CD14-positive monocyte (primary cell): ENCODE measurements at regions of chr5 and their contacts with region 1.

Region 1: GRCh38 chr5:39714036-39714698 is 289.4 kb upstream of the DAB2 start:
- DNase-seq: peak; percentile 19 to 46 (median 40)
- H3K4me3 ChIP-seq: no peak overlapping the region
- H3K4me3 Mint-ChIP-seq: no peak overlapping the region
- H3K27ac ChIP-seq: no peak overlapping the region
- H3K27ac Mint-ChIP-seq: peak overlapping the region in 2 of 7 donors; percentile 10 to 21
- H3K4me1 ChIP-seq: peaks cover 0 to 3% of the 10 kb centered on the region in 2 donors
- H3K4me1 Mint-ChIP-seq: peaks cover 6% of the 10 kb centered on the region
- H3K27me3 ChIP-seq: no peaks in the 10 kb centered on the region
- H3K27me3 Mint-ChIP-seq: peaks cover 0 to 2% (median 0%) of the 10 kb centered on the region in 3 donors
- CTCF ChIP-seq: peak; percentile 74

Region 2: GRCh38 chr5:40879163-40879942 is 1165.2 kb after region 1 on chr5:
- intact Hi-C with region 1: loop called in 1 of 2 experiments (anchors 10 kb)
- DNase-seq: peak in 1 of 3 donors; percentile 38
- H3K4me3 ChIP-seq: no peak overlapping the region
- H3K4me3 Mint-ChIP-seq: no peak overlapping the region
- H3K27ac ChIP-seq: no peak overlapping the region
- H3K27ac Mint-ChIP-seq: no peak overlapping the region
- H3K4me1 ChIP-seq: no peaks in the 10 kb centered on the region
- H3K4me1 Mint-ChIP-seq: peaks cover 3% of the 10 kb centered on the region
- H3K27me3 ChIP-seq: no peaks in the 10 kb centered on the region
- H3K27me3 Mint-ChIP-seq: peaks cover 0 to 3% (median 0%) of the 10 kb centered on the region in 3 donors
- CTCF ChIP-seq: peak; percentile 77